Panc1 (cell line): ENCODE measurements at regions of chr4 and their contacts with region 1.

Region 1: DNA sequence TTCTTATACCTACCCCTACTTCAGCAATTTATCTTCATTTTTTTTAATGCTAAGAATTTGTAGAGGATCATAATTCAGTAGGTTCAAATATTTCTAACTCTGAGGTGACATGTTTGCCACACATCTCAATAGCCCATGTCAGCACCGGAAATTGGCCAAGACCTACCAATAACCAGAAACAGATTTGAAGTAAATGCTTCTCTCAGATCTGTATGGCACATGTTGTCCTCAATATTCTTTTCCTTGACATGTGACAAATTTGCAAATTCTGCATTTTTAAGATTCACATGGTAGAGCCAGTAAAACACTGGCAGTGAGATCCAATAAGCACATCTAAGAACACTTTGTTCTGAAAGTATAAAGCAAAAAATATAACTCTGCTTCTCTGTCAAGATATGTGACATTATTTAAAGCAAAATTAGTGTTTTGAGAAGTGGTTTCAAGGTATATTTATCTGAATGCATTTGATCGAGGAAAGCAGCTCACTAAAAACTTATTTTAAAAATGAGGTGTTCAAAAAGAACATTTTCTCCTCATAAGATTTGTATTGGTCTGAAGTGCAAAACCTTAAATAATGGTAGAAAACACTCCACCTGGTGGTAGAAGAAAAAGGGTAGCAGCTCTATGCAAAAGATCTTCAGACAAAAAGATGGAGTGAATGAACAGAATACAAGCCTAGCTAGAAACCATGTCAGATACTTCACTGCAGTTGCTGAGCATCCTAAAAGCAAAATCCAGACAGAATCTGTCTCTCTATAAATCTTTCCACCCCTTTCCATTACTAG is 513.8 kb upstream of the FAM241A start:
- DNase-seq: no peak
- ATAC-seq: no peak
- H3K4me3 ChIP-seq: no peak overlapping the region
- H3K27ac ChIP-seq: no peak overlapping the region
- H3K4me1 ChIP-seq: no peaks in the 10 kb centered on the region
- H3K27me3 ChIP-seq: no peaks in the 10 kb centered on the region
- CTCF ChIP-seq: peak; percentile 35; the same call in 1 of the 2 replicates

Region 2: DNA sequence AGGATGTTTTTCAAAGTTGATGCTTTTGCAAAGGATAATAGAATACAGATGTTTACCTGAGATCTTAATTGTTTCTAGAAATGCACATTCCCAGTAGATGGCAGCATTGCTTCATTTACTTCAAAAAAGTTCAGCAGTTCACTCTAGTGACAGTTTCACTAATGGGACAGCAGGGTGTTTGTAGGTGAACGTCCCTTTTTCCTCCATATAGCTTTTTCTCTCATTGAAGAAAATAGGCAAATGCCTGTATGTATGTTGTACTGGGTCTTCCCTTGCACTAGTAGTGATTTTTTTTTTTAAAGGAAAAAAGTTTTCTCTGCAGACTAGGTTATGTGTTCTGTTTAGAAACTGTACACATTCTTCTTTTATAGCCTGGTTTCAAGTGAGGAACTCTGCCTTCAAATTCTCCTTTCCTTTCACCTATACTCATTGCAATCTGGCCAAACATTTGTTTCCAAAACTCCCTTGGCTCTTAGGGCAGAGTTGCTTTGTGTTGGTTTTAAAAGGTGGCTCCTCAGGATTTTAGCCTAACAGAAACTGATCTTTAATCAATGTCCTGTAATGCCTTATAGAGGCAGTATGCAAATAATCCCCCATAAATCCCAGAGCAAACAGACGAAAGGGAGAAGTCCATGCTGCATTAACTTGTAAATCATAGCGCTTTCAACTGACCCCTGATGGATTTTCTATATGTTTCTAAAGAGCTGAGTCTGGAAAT is 1632.4 kb before region 1 on chr4:
- CTCF ChIA-PET with region 1: no interaction called
- POLR2A ChIA-PET with region 1: no interaction called
- in situ Hi-C with region 1: no loop called
- intact Hi-C with region 1: loop called (anchors 5 kb)
- DNase-seq: peak; percentile 35
- ATAC-seq: peak; percentile 68
- H3K4me3 ChIP-seq: no peak overlapping the region
- H3K27ac ChIP-seq: no peak overlapping the region
- H3K4me1 ChIP-seq: no peaks in the 10 kb centered on the region
- H3K27me3 ChIP-seq: no peaks in the 10 kb centered on the region
- CTCF ChIP-seq: peak; percentile 59; the same call in 1 of the 2 replicates

Region 3: GRCh38 chr4:111821342-111821741 is 189.9 kb after region 1 on chr4:
- CTCF ChIA-PET with region 1: no interaction called
- POLR2A ChIA-PET with region 1: no interaction called
- in situ Hi-C with region 1: no loop called
- intact Hi-C with region 1: no loop called
- DNase-seq: no peak
- ATAC-seq: no peak
- H3K4me3 ChIP-seq: no peak overlapping the region
- H3K27ac ChIP-seq: no peak overlapping the region
- H3K4me1 ChIP-seq: no peaks in the 10 kb centered on the region
- H3K27me3 ChIP-seq: no peaks in the 10 kb centered on the region
- CTCF ChIP-seq: no peak